ENCODE measurements at regions of chr10 and their contacts with region 1.

Region 1: DNA sequence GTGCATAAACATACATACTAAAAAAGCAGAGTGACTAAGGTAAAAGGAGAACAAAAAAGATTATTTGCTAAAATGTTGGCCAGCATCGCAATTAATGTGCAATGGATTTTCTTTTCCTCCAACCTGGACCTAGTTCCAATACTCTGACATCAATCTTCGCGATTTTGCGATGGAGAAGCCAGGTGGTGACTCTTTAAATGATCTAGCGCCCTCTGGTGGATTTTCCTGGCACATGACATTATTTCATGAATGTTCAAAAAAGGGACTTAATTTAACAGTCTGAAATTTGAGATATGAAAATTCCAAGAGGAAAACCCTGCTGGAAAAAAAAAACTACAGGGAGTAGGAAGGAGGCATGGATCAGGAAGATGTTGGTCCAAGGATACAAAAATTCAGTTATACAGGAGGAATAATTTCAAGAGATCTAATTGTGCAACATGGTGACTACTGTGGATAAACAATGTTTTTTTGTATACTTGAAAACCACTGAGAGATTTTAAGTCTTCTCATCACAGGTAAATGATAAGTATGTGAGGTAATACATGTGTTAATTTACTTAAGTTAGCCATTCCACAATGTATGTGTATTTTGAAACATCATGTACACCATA is 4.3 kb upstream of the KCNMA1 start:
- DNase-seq: peak; percentile 77 to 88
- H3K4me3 ChIP-seq: no peak overlapping the region
- H3K27ac ChIP-seq: no peak overlapping the region
- H3K4me1 ChIP-seq: peaks cover 9 to 41% (median 24%) of the 10 kb centered on the region in 4 donors
- H3K27me3 ChIP-seq: peaks cover 0 to 57% (median 21%) of the 10 kb centered on the region in 3 donors
- CTCF ChIP-seq: peak in 6 of 7 experiments; percentile 48 to 92 (median 72)
- EP300 ChIP-seq: no peak
- POLR2A ChIP-seq: no peak

Region 2: GRCh38 chr10:77173615-77174461 is 468.1 kb before region 1 on chr10:
- intact Hi-C with region 1: loop called (anchors 5 kb)
- DNase-seq: peak; percentile 79 to 93
- H3K4me3 ChIP-seq: no peak overlapping the region
- H3K27ac ChIP-seq: peak overlapping the region in 2 of 5 donors; percentile 10 to 16
- H3K4me1 ChIP-seq: peaks cover 0 to 12% (median 2%) of the 10 kb centered on the region in 4 donors
- H3K27me3 ChIP-seq: peaks cover 0 to 5% (median 0%) of the 10 kb centered on the region in 3 donors
- CTCF ChIP-seq: peak in 5 of 7 experiments; percentile 81 to 90 (median 86)
- EP300 ChIP-seq: no peak
- POLR2A ChIP-seq: no peak

Region 3: GRCh38 chr10:77386838-77387237 is 255.1 kb before region 1 on chr10:
- intact Hi-C with region 1: loop called (anchors 5 kb)
- DNase-seq: peak in 1 of 2 donors; percentile 60
- H3K4me3 ChIP-seq: no peak overlapping the region
- H3K27ac ChIP-seq: peak overlapping the region in 2 of 5 donors; percentile 52 to 58
- H3K4me1 ChIP-seq: peaks cover 5 to 47% (median 23%) of the 10 kb centered on the region in 4 donors
- H3K27me3 ChIP-seq: no peaks in the 10 kb centered on the region
- CTCF ChIP-seq: no peak
- EP300 ChIP-seq: no peak
- POLR2A ChIP-seq: no peak

Measured in stomach (tissue), 19 donors.